ENCODE measurements at regions of chr11 and their contacts with region 1.

Region 1: DNA sequence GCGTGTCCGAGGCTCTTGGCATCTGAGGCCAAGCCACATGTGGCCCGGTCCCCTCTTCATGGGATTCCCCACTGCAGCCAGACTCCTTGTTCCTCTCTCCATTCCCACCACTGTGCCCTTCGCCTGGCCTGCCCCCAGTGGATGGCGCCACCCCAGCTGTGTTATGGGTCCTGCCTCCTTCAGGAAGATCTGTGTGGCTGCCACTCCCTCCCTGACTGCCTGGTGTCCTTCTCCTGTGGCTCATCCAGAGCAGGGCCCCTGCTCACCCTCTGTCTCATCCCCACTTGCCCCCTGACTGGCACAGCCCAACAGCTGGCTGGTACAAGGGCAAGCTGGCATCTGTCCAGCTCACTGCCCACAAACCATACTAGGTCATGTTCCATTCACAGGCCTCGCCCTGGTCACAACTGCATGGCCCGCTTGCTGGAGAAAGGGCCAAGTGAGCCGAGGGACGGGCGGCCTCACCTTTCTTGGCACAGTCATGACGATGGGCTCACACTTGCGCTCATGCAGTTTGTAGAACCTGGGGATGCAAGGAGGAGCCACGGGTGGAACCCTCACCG is 1.9 kb upstream of the PTPRCAP start:
- DNase-seq: peak; percentile 26
- ATAC-seq: no peak
- H3K4me3 Mint-ChIP-seq: peak overlapping the region; percentile 96
- H3K27ac Mint-ChIP-seq: peak overlapping the region; percentile 88
- H3K4me1 Mint-ChIP-seq: peaks cover 76% of the 10 kb centered on the region
- H3K27me3 Mint-ChIP-seq: no peaks in the 10 kb centered on the region
- CTCF ChIP-seq: no peak

Region 2: DNA sequence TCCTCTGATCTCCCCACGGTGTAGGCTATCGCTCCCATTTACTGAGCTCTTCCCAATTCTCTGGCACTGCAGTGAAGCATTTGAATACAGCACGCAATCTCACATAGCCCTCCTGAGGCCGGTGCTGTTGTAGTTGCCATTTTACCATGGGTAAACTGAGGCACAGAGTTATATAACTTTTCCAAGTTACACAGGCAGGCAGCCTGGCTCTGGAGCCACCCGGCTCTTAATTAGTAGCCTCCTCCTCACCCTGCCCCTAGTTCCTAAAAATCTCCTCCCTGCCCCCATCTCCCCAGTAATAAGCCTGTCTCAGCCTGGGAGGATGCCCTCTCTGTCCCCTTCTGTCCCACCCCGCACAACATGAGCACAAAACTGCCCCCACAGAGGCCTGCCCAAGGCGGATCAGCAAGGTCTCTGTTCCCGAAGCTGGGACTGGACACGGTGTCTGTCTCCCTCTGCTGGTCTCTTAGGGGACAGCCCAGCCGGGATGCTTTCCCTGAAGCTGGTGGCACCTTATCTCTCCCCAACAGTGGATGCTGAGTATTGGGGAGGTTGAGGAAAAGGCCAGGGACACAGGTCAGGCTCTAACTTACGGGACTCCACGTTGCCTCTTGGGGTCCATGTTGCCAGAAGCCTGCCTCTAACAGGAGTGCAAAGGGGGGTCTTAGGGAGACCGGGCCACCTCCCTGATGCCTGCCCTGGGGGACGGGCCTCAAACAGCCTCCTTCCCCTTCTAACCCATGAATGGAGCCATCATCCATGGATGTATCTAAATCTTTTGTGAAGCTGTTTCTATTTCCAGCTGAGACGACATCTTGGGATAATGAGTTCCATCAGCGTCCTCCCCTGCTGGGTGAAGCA is 56.9 kb before region 1 on chr11:
- CTCF ChIA-PET with region 1: no interaction called
- POLR2A ChIA-PET with region 1: interaction called, 12 read pairs
- intact Hi-C with region 1: no loop called
- DNase-seq: peak; percentile 75
- ATAC-seq: peak; percentile 80
- H3K4me3 Mint-ChIP-seq: peak overlapping the region; percentile 70
- H3K27ac Mint-ChIP-seq: peak overlapping the region; percentile 90
- H3K4me1 Mint-ChIP-seq: peaks cover 31% of the 10 kb centered on the region
- H3K27me3 Mint-ChIP-seq: no peaks in the 10 kb centered on the region
- CTCF ChIP-seq: peak; percentile 47

Region 3: DNA sequence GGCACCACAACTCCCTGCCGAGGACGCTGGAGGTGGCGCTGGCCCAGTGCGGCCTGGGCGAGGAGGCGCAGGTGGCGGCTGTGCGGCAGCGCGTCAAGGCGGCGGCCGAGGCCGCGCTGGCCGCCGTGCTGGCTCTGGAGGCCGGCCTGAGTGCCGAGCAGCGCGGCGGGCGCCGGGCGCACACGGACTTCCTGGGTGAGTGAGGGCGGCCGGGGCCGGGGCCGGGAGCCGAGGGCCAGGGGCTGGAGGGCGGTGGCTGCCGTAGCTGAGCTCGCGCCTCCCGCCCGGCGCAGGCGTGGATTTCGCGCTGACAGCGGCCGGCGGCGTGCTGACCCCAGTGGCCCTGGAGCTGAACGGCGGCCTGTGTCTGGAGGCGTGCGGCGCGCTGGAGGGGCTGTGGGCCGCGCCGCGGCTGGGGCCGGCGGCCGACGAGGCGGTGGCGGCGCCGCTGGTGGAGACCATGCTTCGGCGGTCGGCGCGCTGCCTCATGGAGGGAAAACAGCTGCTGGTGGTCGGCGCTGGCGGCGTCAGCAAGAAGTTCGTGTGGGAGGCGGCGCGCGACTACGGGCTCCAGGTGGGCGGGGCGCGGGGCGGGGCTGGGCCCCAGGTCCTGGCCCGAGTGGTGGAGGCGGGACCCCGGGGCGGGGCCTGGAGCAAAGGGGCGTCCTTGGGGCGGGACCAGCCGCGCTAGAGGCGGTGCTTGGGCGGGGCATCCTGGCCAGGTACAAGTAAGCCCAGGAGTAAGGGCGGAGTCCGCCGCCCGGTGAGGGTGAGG is 18.6 kb before region 1 on chr11:
- CTCF ChIA-PET with region 1: interaction called, 3 read pairs
- POLR2A ChIA-PET with region 1: interaction called, 378 read pairs
- intact Hi-C with region 1: loop called (anchors 2 kb)
- DNase-seq: peak; percentile 98
- ATAC-seq: peak; percentile 85
- H3K4me3 Mint-ChIP-seq: peak overlapping the region; percentile 79
- H3K27ac Mint-ChIP-seq: peak overlapping the region; percentile 83
- H3K4me1 Mint-ChIP-seq: peaks cover 52% of the 10 kb centered on the region
- H3K27me3 Mint-ChIP-seq: no peaks in the 10 kb centered on the region
- CTCF ChIP-seq: no peak

Region 4: DNA sequence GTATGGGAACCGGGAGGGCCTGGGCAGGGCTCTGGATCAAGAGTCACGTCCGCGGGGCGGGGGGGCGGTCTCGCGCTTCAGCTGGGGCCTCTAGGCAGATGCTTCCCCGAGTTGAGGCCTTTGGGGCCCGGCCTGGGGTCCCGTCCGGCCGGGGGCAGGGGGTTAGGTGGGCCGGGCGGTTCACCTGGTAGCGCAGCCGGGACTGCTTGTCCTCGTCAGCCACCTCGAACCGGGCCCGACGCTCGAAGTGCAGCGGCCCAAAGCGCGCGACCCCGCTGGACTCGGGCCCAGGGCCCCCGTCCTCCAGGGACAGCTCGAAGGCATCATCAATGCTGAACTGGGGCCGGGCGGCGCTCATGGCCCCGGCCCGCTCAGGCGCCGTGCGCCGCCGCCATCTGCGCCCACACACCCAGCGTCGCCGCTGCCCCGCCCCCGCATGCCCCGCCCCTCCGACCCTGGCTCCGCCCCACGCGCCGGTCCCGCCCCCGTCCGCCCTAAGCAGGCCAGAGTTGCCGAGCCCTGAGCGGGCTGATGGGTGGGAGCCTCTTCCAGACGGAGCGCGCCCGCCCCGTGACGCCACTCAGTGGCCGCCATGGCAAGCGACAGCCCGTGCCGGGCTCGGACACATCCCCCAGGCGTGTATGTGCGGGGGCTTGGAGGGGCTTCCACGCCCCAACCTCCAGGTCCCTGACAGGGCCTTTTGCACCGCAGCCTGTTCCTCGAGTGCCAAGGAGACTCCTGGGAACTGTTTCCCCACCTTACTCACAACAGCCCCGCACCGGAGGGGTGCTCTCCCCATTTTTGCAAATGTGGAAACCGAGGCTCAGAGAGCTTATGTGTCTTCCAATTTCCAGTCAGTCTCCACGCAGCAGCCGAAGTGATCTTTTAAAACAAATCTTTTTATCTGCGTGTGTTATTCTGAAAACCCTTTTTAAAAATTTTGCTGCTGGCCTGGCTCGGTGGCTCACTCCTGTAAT is 29.7 kb after region 1 on chr11 and contains the start of gene TMEM134:
- CTCF ChIA-PET with region 1: interaction called, 14 read pairs
- POLR2A ChIA-PET with region 1: interaction called, 1,417 read pairs
- intact Hi-C with region 1: loop called (anchors 1 kb)
- DNase-seq: peak; percentile 88
- ATAC-seq: peak; percentile 73
- H3K4me3 Mint-ChIP-seq: peak within 1 kb of the TSS; percentile 89
- H3K27ac Mint-ChIP-seq: peak within 1 kb of the TSS; percentile 91
- H3K4me1 Mint-ChIP-seq: peaks cover 49% of the 10 kb centered on the region
- H3K27me3 Mint-ChIP-seq: no peaks in the 10 kb centered on the region
- CTCF ChIP-seq: no peak
- total RNA-seq, gene TMEM134: 76.0 and 83.5 TPM in 2 replicates

Region 5: GRCh38 chr11:67583247-67584204 is 144.1 kb after region 1 on chr11 and contains the start of gene GSTP1:
- CTCF ChIA-PET with region 1: no interaction called
- POLR2A ChIA-PET with region 1: interaction called, 10 read pairs
- intact Hi-C with region 1: no loop called
- DNase-seq: peak; percentile 84
- ATAC-seq: peak; percentile 76
- H3K4me3 Mint-ChIP-seq: peak within 1 kb of the TSS; percentile 89
- H3K27ac Mint-ChIP-seq: peak within 1 kb of the TSS; percentile 99
- H3K4me1 Mint-ChIP-seq: peaks cover 76% of the 10 kb centered on the region
- H3K27me3 Mint-ChIP-seq: no peaks in the 10 kb centered on the region
- CTCF ChIP-seq: no peak
- total RNA-seq, gene GSTP1: 331 and 362 TPM in 2 replicates